ENCODE measurements at regions of chr20 and their contacts with region 1.

Region 1: DNA sequence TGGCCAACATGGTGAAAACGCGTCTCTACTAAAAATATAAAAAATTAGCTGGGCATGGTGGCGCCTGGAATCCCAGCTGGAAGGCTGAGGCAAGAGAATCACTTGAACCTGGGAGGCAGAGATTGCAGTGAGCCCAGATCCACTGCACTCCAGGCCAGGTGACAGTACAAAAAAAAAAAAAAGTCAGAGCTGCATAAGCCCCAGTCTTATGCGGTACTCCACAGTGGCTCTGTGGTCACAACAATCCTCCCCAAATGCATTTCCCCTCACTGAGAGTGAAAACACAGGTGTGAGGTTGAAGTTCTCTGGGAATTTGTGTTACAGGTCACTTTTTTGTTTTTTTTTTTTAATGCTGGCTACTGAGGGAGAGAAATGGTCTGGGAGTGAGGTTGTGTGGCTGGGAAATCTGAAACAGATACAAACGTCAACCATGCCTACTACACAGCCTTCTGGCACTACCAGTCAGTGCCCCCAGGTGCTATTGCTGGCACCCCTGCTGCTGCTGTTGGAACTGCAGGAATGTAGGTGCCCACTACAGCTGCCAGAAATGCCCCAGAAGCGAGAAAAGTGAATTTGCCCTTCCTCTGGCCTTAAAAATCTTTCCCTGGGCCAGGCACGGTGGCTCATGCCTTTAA is 5.7 kb downstream of the MRPS26 start:
- DNase-seq: no peak
- H3K4me3 ChIP-seq: no peak overlapping the region
- H3K27ac ChIP-seq: no peak overlapping the region
- H3K4me1 ChIP-seq: peaks cover 5% of the 10 kb centered on the region
- H3K27me3 ChIP-seq: no peaks in the 10 kb centered on the region
- CTCF ChIP-seq: no peak
- POLR2A ChIP-seq: no peak

Region 2: DNA sequence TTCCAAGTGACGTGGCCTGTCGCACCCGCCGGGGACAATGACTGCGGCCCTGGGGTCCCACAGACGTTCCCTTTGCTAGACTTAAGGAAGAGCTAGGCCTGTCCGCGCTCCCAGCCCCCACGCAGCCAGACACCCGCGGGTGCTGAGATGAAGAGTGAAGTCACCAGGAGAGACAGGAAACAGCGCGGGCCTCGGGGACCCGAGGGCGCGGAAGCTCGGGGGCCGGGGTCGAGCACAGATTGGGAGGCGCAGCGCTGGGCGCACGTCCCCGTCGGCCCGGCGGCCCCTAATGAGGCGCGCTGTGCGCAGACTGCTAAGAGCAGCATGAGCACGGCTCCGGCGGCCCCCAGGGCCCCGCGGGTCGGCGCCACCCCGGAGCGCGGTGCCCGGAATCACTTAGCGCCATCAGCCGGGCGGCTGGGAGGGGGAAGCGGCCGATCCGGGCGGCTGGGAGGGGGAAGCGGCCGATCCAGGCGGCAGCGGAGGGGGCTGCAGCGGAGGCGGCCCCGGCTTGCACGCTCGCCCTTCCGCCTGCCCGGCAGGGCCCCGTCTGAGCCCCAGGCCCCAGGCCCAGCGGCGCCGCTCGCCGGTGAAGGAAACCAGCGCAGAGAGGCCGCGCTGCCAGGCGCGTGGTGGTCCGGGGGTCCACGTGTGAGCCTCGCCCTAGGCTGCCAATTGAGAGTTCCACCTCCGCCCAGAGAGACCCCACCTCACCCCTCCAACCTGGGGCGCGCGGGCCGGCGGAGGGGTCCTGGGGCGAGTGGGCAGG is 41.3 kb after region 1 on chr20:
- CTCF ChIA-PET with region 1: interaction called, 14 read pairs
- POLR2A ChIA-PET with region 1: no interaction called
- dilution Hi-C with region 1: no loop called
- intact Hi-C with region 1: no loop called
- DNase-seq: peak; percentile 25
- H3K4me3 ChIP-seq: peak overlapping the region in 1 of 3 experiments; percentile 32
- H3K27ac ChIP-seq: no peak overlapping the region
- H3K4me1 ChIP-seq: peaks cover 6% of the 10 kb centered on the region
- H3K27me3 ChIP-seq: peaks cover 0 to 8% of the 10 kb centered on the region in 2 experiments
- CTCF ChIP-seq: no peak
- POLR2A ChIP-seq: no peak

Region 3: DNA sequence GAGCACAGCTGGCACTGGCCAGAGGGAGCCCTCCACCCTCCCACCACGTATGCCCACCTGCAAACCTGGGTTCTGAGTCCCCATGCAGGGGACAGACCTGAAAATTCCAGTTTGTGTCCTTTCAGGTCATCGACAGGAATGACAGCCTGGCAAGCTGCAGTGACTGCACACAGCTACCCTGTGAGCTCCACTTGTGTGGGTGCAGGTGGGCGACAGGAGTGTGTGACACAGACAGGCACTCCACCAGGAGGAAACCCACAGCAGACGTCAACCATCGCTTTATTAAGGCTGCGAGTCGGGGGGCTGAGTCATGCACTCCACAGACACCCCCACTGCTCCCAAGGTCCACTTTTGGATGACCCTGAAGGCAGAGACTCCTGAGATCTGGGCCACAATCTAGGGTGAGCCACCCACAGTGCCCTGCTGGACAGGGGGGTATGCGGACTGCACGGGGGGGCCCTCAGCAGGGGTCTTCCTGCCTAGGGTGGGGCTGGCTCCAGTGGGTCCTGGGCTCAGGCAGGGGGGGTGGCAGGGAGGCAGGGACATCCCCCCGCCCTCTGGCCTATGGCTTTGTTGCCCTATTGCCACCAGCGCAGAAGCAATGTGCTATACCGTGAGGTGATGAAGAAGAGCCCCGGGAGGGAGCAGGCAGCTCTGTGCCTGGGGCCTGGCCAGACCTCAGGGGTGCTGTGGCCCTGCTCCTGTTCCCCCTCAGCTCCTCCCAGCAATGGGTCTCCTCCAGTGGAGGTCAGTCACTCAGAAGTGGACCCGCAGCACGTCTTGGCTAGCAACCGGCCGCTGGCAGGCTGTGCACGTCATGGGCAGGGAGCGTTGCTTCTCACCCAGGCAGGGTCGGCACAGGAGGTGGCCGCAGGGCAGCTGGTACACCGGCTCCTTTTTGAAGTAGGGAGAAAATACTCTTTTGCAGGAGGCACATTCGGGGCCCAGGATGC is 58.1 kb after region 1 on chr20:
- CTCF ChIA-PET with region 1: interaction called, 59 read pairs
- POLR2A ChIA-PET with region 1: interaction called, 3 read pairs
- dilution Hi-C with region 1: no loop called
- intact Hi-C with region 1: no loop called
- DNase-seq: no peak
- H3K4me3 ChIP-seq: no peak overlapping the region
- H3K27ac ChIP-seq: no peak overlapping the region
- H3K4me1 ChIP-seq: no peaks in the 10 kb centered on the region
- H3K27me3 ChIP-seq: no peaks in the 10 kb centered on the region
- CTCF ChIP-seq: no peak
- POLR2A ChIP-seq: no peak

Region 4: GRCh38 chr20:3248167-3248992 is 196.9 kb after region 1 on chr20:
- CTCF ChIA-PET with region 1: interaction called, 13 read pairs
- POLR2A ChIA-PET with region 1: no interaction called
- dilution Hi-C with region 1: no loop called
- intact Hi-C with region 1: no loop called
- DNase-seq: peak; percentile 38
- H3K4me3 ChIP-seq: peak overlapping the region in 2 of 3 experiments; percentile 37 to 43
- H3K27ac ChIP-seq: no peak overlapping the region
- H3K4me1 ChIP-seq: peaks cover 7% of the 10 kb centered on the region
- H3K27me3 ChIP-seq: peaks cover 0 to 11% of the 10 kb centered on the region in 2 experiments
- CTCF ChIP-seq: no peak
- POLR2A ChIP-seq: no peak

Region 5: GRCh38 chr20:3312940-3313682 is 261.6 kb after region 1 on chr20:
- CTCF ChIA-PET with region 1: interaction called, 23 read pairs
- POLR2A ChIA-PET with region 1: no interaction called
- dilution Hi-C with region 1: no loop called
- intact Hi-C with region 1: loop called (anchors 2 kb)
- DNase-seq: peak; percentile 82
- H3K4me3 ChIP-seq: no peak overlapping the region
- H3K27ac ChIP-seq: no peak overlapping the region
- H3K4me1 ChIP-seq: peaks cover 13% of the 10 kb centered on the region
- H3K27me3 ChIP-seq: no peaks in the 10 kb centered on the region
- CTCF ChIP-seq: no peak
- POLR2A ChIP-seq: no peak